Activated CD4-positive, alpha-beta T cell treated with anti-CD3 and anti-CD28 coated beads, Interleukin-2, amount 10 ng/mL, durations not matched to agents 24 days and 14 days (primary cell): ENCODE measurements at regions of chr2 and their contacts with region 1.

Region 1: DNA sequence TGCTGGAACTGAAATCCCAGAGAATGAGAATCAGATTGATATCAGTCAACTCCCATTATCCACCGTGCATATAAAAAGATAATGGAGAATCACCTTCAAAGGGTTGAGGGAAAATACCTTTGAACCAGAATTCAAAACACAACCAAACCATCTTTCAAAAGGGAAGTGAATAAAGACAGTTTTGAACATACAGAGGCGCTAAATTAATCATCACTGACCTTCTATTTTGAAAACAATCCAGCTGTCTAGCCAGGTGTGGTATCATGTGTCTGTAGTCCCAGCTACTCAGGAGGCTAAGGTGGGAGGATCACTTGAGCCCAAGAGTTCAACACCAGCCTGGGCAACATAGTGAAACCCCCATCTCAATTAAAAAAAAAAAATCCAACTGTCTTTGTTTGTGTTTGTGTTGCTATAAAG is 63.6 kb downstream of the TRABD2A start:
- DNase-seq: no peak
- H3K4me3 Mint-ChIP-seq: peak overlapping the region; percentile 9
- H3K27ac Mint-ChIP-seq: peak overlapping the region; percentile 56
- H3K4me1 Mint-ChIP-seq: peaks cover 32% of the 10 kb centered on the region
- H3K27me3 Mint-ChIP-seq: no peaks in the 10 kb centered on the region

Region 2: DNA sequence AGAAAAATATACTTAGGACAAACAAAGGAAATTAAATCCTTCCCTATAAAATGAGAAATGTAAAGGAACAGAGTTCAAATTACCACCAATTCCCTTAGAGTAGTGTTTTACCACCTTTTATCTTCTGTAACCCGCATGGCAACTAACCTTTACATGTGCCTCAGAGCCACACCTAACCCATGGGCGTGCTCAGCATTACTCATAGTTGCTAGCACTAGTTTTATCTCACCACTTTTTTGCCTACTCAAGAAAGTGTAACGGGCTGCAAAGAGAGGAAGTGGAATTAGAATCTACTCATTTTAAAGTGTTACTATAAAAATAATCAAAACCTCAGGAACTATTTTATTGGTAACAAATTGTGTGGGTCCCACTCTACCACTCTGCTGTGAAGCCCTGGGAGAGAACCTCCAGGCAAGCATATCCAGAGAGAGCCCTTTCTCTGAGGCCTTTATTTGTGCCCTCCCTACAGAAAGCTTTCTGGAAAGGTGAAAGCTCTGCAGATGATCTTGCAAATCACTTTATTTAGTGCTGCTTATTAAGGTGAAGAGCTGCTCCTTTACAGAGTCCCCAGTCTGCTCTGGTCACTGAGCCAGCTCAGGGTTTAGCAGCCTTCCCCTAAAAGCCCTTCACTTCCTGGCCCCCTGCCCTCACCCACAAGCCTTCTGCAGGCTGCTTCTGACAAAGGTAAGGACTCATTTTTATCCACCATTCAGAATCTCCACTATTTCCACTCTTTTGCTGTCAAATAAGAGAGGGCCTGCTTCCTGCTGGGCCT is 35.1 kb before region 1 on chr2:
- intact Hi-C with region 1: loop called (anchors 1 kb)
- DNase-seq: peak; percentile 86
- H3K4me3 Mint-ChIP-seq: peak overlapping the region; percentile 50
- H3K27ac Mint-ChIP-seq: peak overlapping the region; percentile 90
- H3K4me1 Mint-ChIP-seq: peaks cover 57% of the 10 kb centered on the region
- H3K27me3 Mint-ChIP-seq: no peaks in the 10 kb centered on the region

Region 3: GRCh38 chr2:84832772-84833461 is 15.7 kb after region 1 on chr2:
- intact Hi-C with region 1: loop called (anchors 2 kb)
- DNase-seq: peak; percentile 81
- H3K4me3 Mint-ChIP-seq: peak overlapping the region; percentile 73
- H3K27ac Mint-ChIP-seq: peak overlapping the region; percentile 82
- H3K4me1 Mint-ChIP-seq: peaks cover 40% of the 10 kb centered on the region
- H3K27me3 Mint-ChIP-seq: no peaks in the 10 kb centered on the region